MCF 10A (cell line): ENCODE measurements at regions of chr19 and their contacts with region 1.

Region 1: DNA sequence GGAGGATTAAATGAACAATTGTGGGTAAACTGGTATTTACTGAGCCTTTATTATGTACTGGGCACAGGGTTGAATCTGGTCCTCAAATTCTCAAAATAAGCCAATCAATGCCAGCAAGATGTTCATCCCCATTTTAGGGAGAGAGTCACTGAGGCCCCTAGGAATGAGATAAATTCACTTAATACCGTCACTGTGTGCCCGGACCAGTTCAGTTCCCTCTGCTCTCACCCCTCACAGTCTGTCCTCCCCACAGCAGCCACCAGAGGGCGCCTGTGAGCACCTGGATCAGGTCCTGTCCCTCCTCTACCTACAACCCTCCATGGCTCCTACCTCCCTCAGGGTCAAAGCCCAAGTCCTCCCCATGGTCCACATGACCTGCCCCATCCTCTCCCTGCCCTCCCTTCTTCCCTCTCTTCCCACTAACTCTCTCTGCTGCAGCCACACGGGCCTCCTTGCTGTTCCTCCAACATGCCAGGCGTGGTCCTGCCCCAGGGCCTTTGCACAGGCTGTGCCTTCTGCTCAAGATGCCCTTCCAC is 42.0 kb upstream of the NFIC start:
- DNase-seq: peak; percentile 62
- H3K4me3 Mint-ChIP-seq: no peak overlapping the region
- H3K27ac Mint-ChIP-seq: no peak overlapping the region
- H3K4me1 Mint-ChIP-seq: no peaks in the 10 kb centered on the region
- H3K27me3 Mint-ChIP-seq: peaks cover 39% of the 10 kb centered on the region
- CTCF ChIP-seq: peak; percentile 75

Region 2: GRCh38 chr19:3398114-3398899 is 73.9 kb after region 1 on chr19:
- CTCF ChIA-PET with region 1: no interaction called
- POLR2A ChIA-PET with region 1: no interaction called
- intact Hi-C with region 1: no loop called
- DNase-seq: no peak
- H3K4me3 Mint-ChIP-seq: no peak overlapping the region
- H3K27ac Mint-ChIP-seq: peak overlapping the region; percentile 19
- H3K4me1 Mint-ChIP-seq: peaks cover 17% of the 10 kb centered on the region
- H3K27me3 Mint-ChIP-seq: no peaks in the 10 kb centered on the region
- CTCF ChIP-seq: no peak

Region 3: DNA sequence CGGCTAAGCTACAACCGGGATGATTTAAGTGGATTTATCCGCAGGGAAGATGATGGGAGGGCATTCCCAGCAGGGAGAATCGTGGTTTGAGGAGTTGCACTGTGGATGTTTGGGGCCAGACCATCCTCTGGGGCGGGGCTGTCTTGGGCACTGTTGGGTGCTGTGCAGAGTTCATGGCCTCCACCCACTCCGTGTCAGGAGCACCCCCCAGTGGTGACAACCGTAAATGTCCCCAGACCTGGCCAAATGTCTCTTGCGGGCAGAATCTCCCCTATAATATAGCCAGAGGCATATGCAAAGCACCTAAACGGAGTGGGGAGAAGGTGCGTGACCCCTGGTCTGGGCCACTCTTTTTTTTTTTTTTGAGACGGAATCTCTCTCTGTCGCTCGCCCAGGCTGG is 115.7 kb after region 1 on chr19:
- CTCF ChIA-PET with region 1: interaction called, 5 read pairs
- POLR2A ChIA-PET with region 1: no interaction called
- intact Hi-C with region 1: loop called (anchors 1 kb)
- DNase-seq: peak; percentile 56
- H3K4me3 Mint-ChIP-seq: no peak overlapping the region
- H3K27ac Mint-ChIP-seq: no peak overlapping the region
- H3K4me1 Mint-ChIP-seq: no peaks in the 10 kb centered on the region
- H3K27me3 Mint-ChIP-seq: no peaks in the 10 kb centered on the region
- CTCF ChIP-seq: peak; percentile 38

Region 4: GRCh38 chr19:3527250-3527910 is 203.0 kb after region 1 on chr19:
- CTCF ChIA-PET with region 1: no interaction called
- POLR2A ChIA-PET with region 1: no interaction called
- intact Hi-C with region 1: no loop called
- DNase-seq: no peak
- H3K4me3 Mint-ChIP-seq: no peak overlapping the region
- H3K27ac Mint-ChIP-seq: no peak overlapping the region
- H3K4me1 Mint-ChIP-seq: no peaks in the 10 kb centered on the region
- H3K27me3 Mint-ChIP-seq: no peaks in the 10 kb centered on the region
- CTCF ChIP-seq: no peak